ENCODE measurements at regions of chr10 and their contacts with region 1.

Region 1: DNA sequence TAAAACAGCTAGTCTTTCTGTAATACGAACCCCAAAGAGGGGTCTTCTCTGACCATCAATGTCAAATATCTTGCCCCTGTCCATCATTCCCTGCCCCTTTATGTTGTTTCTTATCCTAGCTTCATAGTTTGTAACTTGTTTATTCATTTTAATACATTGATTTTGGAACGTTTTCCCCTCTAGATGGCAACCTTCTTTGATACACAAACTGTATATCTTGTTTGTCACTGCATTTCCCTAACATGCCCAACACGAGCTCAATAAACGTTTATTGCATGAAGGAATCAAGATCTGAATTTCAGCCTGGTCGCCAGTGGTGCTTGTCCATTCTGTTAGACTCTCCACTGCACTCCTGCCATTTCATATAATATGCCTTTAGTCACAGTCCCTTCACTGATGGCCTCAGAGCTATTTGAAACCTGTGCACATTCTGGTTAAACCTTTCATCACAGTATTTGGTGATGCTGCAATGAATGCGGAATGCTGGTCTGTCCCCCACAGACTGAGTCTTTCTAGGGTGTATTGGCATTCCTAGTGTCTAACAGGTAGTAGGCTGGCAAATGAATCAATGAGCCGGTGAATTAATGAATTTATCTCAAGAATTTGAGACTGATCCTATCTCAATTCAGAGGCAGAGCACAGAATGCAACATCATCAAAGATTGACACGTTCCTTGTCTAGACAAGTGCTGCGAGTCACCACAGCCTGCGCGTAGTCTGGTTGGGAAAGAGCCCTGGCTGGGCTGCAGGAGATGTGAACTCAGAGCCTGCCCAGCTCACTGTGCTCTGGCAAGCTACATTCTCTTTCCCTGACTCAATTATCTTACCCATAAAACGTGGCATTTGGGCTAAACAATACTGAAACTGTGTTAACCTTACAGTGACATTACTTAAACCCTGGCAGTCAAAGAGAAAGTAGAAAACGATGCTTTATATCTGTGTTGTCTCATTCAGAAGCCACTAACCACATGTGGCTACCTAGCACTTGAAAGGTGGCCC is 55.2 kb upstream of the FRMD4A start:
- DNase-seq: peak; percentile 64
- H3K4me3 ChIP-seq: no peak overlapping the region
- H3K27ac ChIP-seq: no peak overlapping the region
- H3K27me3 ChIP-seq: peaks cover 3% of the 10 kb centered on the region
- CTCF ChIP-seq: peak; percentile 16; the same call in 1 of the 2 replicates

Region 2: GRCh38 chr10:14371581-14371980 is 14.3 kb before region 1 on chr10:
- CTCF ChIA-PET with region 1: interaction called, 11 read pairs
- POLR2A ChIA-PET with region 1: no interaction called
- DNase-seq: no peak
- H3K4me3 ChIP-seq: no peak overlapping the region
- H3K27ac ChIP-seq: no peak overlapping the region
- H3K27me3 ChIP-seq: peaks cover 27% of the 10 kb centered on the region
- CTCF ChIP-seq: no peak

Region 3: GRCh38 chr10:14528450-14528849 is 142.6 kb after region 1 on chr10:
- CTCF ChIA-PET with region 1: no interaction called
- POLR2A ChIA-PET with region 1: no interaction called
- DNase-seq: no peak
- H3K4me3 ChIP-seq: no peak overlapping the region
- H3K27ac ChIP-seq: no peak overlapping the region
- H3K27me3 ChIP-seq: no peaks in the 10 kb centered on the region
- CTCF ChIP-seq: no peak

Measured in AG04450 (cell line).